ENCODE measurements at regions of chr4 and their contacts with region 1.

Region 1: DNA sequence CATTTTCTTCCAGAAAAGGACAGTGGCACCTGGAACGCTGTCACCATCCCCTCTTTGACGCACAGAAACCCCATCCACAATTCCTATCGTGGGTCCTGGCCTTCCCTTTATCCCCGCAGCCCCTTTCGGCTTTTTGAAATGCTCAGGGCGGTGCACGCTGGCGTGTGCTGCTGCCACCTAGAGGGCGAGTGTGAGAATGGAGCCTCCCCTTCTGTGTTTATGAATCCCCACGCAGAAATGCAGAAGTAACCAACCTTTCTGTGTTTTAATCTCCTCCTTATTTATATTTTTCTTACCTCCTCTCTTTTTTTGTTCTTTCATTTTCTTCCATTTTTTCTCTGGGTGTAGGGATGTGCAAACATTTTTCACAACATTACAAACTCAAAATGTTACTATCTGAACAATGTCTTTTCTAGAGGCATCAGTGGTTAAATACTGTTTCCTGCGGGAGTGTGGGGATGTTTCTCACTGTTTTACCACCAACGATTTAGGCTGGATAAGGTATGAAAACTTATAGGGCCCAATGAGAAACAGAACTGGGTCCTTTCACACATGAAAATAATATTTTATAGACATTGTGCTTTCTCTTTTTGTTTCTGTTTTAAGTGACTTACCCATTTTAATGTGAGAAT is 50.0 kb downstream of the TMA16 start:
- DNase-seq: no peak
- ATAC-seq: peak; percentile 73

Region 2: DNA sequence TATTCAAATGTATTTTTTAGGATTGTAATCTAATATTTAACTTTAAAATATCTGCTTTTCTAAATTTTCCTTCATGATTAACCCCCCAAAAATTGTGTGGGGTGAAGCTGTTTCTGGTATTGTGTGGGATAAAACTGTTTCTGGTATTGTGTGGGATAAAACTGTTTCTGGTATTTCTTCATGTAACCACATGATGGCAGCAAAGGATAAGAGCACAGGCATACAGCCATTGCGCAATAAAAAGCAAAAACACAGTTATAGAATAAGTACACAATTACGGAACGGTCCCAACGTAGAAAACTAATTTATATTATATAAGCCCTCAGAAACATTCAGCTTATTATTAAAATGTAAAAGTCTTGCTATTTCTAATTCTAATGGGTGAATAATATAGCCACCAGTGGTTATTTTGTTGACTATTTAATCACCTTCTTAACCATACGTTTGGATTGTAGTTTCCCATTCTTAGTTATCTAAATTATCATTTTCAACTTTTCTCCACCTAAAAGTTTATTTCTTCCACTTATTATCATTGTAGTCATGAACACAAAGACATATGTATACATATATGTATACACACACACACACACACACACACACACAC is 1046.9 kb before region 1 on chr4:
- intact Hi-C with region 1: loop called (anchors 2 kb)
- DNase-seq: no peak
- ATAC-seq: peak; percentile 79

Region 3: DNA sequence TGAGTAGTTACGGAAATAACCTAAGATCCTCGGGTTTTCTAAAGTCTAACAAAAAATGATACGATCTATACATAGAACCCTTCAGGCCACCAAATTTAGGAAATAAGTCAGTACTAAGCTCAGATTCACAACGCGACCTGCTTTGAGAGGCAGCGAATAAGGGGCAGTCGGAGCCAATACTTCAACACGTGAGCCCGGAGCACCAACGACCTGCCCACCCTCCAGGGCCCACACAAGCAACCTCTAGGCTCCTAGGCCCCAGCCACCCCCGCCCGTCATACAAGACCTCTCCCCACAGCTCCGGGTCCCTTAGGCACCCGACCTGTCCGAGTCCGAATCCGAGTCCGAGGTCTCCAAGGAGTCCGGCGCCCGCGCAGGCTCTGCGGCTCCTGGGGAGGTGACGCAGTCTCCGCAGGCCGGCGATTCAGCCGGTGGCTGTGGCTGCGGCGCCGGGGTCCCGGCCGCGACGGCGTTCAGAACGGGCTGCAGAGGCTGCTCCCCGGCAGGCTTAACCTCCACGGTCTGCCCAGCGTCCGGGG is 378.4 kb before region 1 on chr4:
- intact Hi-C with region 1: loop called (anchors 10 kb)
- DNase-seq: peak; percentile 75
- ATAC-seq: peak; percentile 68

Region 4: DNA sequence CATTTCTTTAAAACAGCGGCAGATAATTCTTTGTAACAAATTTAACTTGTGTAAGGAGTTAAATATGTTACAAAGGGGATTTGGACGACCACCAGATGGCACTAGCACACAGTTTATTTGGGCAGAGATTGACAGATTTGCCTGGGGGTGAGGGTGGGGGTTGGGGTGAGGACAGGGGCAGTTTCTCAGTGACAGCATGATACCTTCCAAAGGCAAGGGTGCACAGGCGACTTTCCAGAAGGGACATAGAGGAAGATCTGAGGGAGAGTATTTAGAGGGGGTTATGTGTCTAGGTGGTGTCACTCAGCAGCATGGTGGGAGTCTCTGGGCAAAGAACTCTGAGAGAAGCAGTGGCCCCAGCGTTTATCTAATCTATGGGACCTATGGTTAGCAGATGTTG is 59.6 kb before region 1 on chr4:
- intact Hi-C with region 1: loop called (anchors 2 kb)
- DNase-seq: no peak
- ATAC-seq: no peak